ENCODE measurements at regions of chr9 and their contacts with region 1.

Region 1: GRCh38 chr9:127396808-127397497 is at the start of gene SLC2A8:
- DNase-seq: peak; percentile 99
- H3K4me3 ChIP-seq: peak within 1 kb of the TSS; percentile 53
- H3K4me1 ChIP-seq: no peaks in the 10 kb centered on the region; the same call in none of the 2 replicates
- H3K27me3 ChIP-seq: no peaks in the 10 kb centered on the region

Region 2: DNA sequence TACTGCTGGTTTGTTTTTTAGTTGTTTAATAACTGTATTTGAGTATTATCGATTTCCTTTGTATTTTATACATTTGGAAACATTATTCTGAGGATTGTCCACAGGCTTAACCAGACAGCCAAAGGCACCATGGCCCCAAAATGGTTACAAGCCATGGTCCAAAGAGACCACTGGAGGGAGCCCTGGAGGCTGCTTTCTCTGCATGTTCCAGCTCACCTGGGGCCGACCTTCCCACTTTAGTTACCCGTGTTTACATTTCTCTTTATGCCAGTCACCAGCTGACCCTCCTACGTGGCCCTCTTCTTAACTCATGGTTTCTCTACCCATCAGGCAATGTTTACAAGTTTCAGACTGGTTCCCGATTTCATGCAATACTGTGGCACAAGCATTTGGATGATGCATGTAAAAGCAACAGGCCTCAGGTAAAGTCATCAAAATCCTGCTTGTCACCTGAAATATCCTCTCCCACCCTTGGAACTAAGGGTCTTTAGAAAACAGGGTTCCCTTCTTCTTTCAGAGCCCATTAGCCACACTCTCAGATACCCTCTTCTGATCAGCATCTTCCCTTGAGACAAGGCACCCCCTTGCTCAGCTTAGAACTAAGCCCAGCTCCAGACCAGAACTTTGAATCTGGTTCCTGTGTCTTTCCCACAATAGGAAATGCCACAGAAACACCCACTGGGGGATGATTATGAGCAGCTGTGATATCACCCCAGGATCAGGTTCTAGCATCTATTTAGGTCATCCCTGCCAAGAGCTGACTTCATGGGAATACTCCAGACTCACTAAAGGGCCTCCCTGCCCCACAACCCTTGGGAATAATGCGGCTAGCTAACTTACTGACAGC is 182.3 kb before region 1 on chr9:
- in situ Hi-C with region 1: loop called (anchors 10 kb)
- DNase-seq: peak; percentile 54 to 80
- H3K4me3 ChIP-seq: no peak overlapping the region
- H3K4me1 ChIP-seq: no peaks in the 10 kb centered on the region
- H3K27me3 ChIP-seq: no peaks in the 10 kb centered on the region

Measured in HAP-1 (cell line).